ENCODE measurements at regions of chr20 and their contacts with region 1.

Region 1: GRCh38 chr20:45771182-45771759 is 20.4 kb downstream of the WFDC3 start:
- DNase-seq: peak; percentile 87
- H3K4me3 ChIP-seq: no peak overlapping the region
- H3K27ac ChIP-seq: peak overlapping the region; percentile 67 to 79 (median 75)
- H3K4me1 ChIP-seq: peaks cover 0 to 16% (median 10%) of the 10 kb centered on the region in 4 donors
- H3K27me3 ChIP-seq: no peaks in the 10 kb centered on the region
- CTCF ChIP-seq: peak; percentile 73 to 96 (median 90)
- EP300 ChIP-seq: no peak
- POLR2A ChIP-seq: no peak

Region 2: DNA sequence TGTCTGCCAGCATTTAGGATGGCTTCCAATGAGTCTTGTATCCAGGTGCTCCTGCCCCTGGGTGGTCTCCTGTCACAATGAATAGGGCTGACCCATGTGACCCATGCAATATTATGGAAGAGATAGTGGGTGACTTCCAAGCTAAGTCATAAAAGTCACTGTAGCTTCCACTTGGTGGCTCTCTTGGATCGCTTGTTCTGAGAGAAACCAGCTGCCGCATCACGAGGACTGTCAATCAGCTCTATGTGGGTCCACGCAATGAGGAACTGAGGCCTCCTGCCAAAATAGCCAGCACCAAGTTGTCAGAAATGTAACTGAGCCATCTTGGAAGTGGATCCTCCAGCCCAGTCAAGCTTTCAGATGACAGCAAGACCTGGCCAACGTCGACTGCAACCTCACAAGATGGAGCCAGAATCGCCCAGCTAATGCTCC is 448.3 kb before region 1 on chr20:
- intact Hi-C with region 1: loop called (anchors 2 kb)
- DNase-seq: peak; percentile 79
- H3K4me3 ChIP-seq: no peak overlapping the region
- H3K27ac ChIP-seq: peak overlapping the region in 2 of 4 donors; percentile 49 to 59
- H3K4me1 ChIP-seq: no peaks in the 10 kb centered on the region
- H3K27me3 ChIP-seq: no peaks in the 10 kb centered on the region
- CTCF ChIP-seq: no peak
- EP300 ChIP-seq: no peak
- POLR2A ChIP-seq: no peak

Region 3: DNA sequence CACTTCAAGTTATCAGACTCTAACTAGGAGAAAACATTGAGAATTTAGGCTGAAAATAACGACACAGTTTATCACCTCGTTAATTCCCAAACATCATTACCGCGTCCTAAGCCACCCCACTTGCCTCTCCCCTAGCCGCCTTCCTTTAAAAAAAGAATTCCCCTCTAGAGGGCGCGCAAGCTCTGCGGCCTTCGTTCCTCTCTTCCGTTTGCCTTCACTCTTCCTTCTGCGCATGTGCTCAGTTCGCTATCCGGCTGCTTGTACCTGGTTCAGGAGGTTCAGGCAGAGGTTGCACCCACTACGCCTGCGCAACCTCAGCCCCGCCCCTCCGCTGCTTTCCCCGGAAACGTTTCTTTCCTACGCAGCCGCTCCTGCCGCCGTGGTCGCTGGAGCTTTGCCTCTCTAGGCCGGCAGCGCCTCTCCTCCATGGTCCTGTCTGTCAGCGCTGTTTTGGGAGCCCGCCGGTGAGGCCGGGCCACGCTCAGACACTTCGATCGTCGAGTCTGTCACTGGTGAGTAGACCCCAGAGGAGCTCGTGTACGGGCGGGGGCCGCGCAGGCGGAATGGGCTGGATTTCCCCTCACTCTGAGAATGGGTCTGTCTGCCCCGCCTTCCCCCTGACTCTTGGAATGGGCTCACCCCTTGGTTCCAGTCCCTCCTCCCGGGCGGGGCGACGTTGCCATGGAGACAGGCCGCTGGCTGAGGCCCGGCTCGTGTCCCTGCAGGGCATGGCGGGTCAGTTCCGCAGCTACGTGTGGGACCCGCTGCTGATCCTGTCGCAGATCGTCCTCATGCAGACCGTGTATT is 408.3 kb before region 1 on chr20 and contains the start of gene SYS1:
- intact Hi-C with region 1: no loop called
- DNase-seq: peak; percentile 99
- H3K4me3 ChIP-seq: peak within 1 kb of the TSS; percentile 54 to 72 (median 67)
- H3K27ac ChIP-seq: peak within 1 kb of the TSS; percentile 88 to 96 (median 94)
- H3K4me1 ChIP-seq: peaks cover 0 to 56% (median 52%) of the 10 kb centered on the region in 4 donors
- H3K27me3 ChIP-seq: no peaks in the 10 kb centered on the region
- CTCF ChIP-seq: peak; percentile 83 to 96 (median 91)
- EP300 ChIP-seq: peak in 1 of 4 donors; percentile 72
- POLR2A ChIP-seq: peak; percentile 85 to 91
- total RNA-seq, gene SYS1: 44.2 to 58.7 (median 52.2) TPM

Region 4: GRCh38 chr20:45545754-45546453 is 225.4 kb before region 1 on chr20:
- intact Hi-C with region 1: loop called (anchors 1 kb)
- DNase-seq: no peak
- H3K4me3 ChIP-seq: no peak overlapping the region
- H3K27ac ChIP-seq: no peak overlapping the region
- H3K4me1 ChIP-seq: no peaks in the 10 kb centered on the region
- H3K27me3 ChIP-seq: no peaks in the 10 kb centered on the region
- CTCF ChIP-seq: peak in 2 of 4 experiments; percentile 22 to 27
- EP300 ChIP-seq: no peak
- POLR2A ChIP-seq: no peak

Region 5: GRCh38 chr20:45833030-45833882 is 62.0 kb after region 1 on chr20 and contains the start of gene SNX21:
- intact Hi-C with region 1: no loop called
- DNase-seq: peak; percentile 97
- H3K4me3 ChIP-seq: peak within 1 kb of the TSS; percentile 65 to 78 (median 73)
- H3K27ac ChIP-seq: peak within 1 kb of the TSS; percentile 91 to 97 (median 94)
- H3K4me1 ChIP-seq: peaks cover 0 to 46% (median 39%) of the 10 kb centered on the region in 4 donors
- H3K27me3 ChIP-seq: no peaks in the 10 kb centered on the region
- CTCF ChIP-seq: no peak
- EP300 ChIP-seq: peak in 2 of 4 donors; percentile 15
- POLR2A ChIP-seq: peak in 1 of 2 donors; percentile 14
- total RNA-seq, gene SNX21: 46.7 to 82.5 (median 52.2) TPM

Measured in sigmoid colon (tissue), 7 donors.